ENCODE measurements at regions of chr4 and their contacts with region 1.

Region 1: DNA sequence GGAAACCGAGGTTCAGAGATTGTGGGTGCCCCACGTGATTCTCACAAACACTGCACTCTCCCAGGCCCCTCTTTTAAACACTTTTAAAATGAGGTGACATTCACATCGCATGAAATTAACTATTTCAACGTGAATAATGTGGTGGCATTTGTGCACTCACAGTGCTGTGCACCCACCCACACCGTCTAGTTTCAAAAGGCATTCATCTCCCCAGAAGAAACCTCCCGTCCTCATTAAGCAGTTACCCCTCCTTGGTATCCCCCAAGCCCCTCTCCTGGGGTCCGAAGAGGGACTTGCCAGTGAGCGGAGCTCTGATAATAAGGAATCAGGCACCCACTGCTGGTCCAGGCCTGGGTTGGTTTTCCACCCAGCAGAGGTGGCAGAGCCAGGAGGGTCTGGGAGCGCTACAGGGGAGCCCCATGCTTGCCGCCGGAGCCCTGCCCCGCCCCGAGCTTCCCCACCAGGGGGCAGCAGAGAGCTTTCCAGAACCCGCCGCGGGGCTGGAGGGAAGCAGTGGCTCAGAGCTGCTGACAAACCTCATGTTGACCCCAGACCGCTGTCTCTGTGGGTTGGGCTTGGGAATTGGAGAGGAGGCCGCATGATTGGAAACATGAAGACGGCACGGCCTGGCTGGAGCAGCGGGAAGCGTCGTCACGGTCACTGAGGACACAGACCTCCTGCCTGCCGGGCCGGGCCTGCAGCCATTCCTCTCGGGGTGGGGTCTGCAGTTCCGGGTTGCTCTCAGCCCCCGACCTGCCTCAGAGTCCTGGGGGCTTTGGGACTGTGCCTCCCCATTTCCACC is 27.5 kb upstream of the HTRA3 start:
- DNase-seq: peak; percentile 66
- H3K4me3 ChIP-seq: no peak overlapping the region
- H3K27ac ChIP-seq: no peak overlapping the region
- H3K27me3 ChIP-seq: peaks cover 4% of the 10 kb centered on the region
- CTCF ChIP-seq: peak; percentile 96

Region 2: GRCh38 chr4:8267077-8267476 is 25.0 kb after region 1 on chr4:
- CTCF ChIA-PET with region 1: interaction called, 13 read pairs
- POLR2A ChIA-PET with region 1: no interaction called
- DNase-seq: no peak
- H3K4me3 ChIP-seq: no peak overlapping the region
- H3K27ac ChIP-seq: no peak overlapping the region
- H3K27me3 ChIP-seq: peaks cover 2% of the 10 kb centered on the region
- CTCF ChIP-seq: peak; percentile 78

Region 3: DNA sequence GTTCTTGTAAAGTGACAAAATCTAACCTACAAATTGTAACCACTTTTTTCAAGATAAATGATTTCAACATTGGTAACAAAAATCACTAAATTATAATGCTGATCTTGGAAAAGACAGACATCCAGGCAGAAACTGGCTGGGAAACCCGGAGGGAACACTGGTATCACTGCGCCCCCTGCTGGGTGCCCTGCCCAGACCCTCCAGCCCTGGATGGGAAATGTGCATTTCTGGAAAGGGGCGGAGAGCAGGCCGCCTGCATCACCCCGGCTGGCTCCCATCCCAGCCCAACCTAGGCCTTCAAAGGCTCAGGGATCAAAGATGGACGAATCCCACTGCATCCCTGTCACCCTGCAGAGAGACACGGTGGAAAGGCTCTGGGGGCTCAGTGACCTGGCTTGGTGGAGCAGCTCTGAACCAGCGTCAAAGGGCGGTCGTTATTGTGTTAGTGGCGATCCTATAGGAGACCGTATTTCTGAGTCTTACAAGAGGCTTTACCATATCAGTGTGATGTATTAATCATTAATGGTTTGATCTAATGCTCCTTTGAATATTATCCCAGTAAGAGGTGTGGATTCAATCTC is 161.2 kb after region 1 on chr4:
- CTCF ChIA-PET with region 1: interaction called, 73 read pairs
- POLR2A ChIA-PET with region 1: interaction called, 5 read pairs
- DNase-seq: peak; percentile 66
- H3K4me3 ChIP-seq: no peak overlapping the region
- H3K27ac ChIP-seq: no peak overlapping the region
- H3K27me3 ChIP-seq: no peaks in the 10 kb centered on the region
- CTCF ChIP-seq: peak; percentile 93

Region 4: DNA sequence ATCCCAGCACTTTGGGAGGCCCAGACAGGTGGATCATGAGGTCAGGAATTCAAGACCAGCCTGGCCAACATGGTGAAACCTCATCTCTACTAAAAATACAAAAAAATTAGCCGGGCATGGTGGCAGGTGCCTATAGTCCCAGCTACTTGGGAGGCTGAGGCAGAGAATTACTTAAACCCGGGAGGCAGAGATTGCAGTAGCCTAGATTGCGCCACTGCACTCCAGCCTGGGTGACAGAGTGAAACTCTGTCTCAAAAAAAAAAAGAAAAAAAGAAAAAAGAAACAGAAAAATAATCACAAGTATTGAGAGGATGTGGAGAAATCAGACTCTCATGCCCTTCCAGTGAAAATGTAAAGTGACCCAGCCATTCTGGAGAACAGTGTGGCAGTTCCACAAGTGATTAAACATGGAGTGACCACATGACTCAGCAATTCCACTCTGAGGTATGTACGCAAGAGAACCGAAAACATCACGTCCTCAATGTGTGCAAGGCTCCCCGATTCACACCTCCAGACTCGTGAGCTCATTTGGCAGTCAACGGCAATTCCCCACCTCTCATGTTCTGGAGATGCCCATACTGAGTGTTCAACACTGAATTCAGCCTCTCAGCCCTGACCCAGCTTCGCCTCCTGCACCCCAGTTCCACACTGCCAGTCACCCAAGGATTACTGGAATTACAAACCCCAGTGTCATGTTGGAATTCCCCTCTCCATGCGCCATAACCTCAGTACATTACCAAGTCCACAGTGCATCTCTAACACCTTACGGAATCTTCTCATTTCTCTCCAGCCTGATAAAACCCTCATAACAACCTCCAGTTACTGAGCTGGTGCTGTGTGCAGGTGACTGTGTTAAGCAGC is 177.3 kb after region 1 on chr4:
- CTCF ChIA-PET with region 1: interaction called, 12 read pairs
- POLR2A ChIA-PET with region 1: no interaction called
- DNase-seq: no peak
- H3K4me3 ChIP-seq: no peak overlapping the region
- H3K27ac ChIP-seq: no peak overlapping the region
- H3K27me3 ChIP-seq: no peaks in the 10 kb centered on the region
- CTCF ChIP-seq: no peak

Measured in AG04450 (cell line).